ENCODE measurements at regions of chr15 and their contacts with region 1.

Region 1: DNA sequence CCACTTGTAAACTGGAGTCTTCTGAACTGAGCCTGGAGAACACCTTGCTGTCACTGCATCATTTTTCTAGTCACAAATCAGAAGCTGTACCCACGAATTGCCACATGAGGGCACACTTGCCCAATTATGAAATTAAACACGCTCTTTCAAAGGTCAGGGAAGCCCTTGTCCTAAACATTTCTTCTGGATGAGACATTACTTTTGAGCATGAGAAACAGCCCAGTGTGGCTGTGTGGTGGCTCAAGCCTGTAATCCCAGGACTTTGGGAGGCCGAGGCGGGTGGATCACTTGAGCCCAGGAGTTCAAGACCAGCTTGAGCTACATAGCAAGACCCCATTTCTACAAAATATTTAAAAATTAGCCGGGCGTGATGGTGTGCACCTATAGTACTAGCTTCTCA is 27.5 kb upstream of the CFAP161 start:
- DNase-seq: peak in 4 of 5 donors; percentile 19 to 57 (median 40)
- H3K4me3 ChIP-seq: no peak overlapping the region
- H3K27ac ChIP-seq: no peak overlapping the region
- H3K4me1 ChIP-seq: peaks cover 1% of the 10 kb centered on the region
- H3K27me3 ChIP-seq: no peaks in the 10 kb centered on the region
- CTCF ChIP-seq: peak; percentile 16 to 60 (median 54)
- EP300 ChIP-seq: no peak
- POLR2A ChIP-seq: no peak

Region 2: DNA sequence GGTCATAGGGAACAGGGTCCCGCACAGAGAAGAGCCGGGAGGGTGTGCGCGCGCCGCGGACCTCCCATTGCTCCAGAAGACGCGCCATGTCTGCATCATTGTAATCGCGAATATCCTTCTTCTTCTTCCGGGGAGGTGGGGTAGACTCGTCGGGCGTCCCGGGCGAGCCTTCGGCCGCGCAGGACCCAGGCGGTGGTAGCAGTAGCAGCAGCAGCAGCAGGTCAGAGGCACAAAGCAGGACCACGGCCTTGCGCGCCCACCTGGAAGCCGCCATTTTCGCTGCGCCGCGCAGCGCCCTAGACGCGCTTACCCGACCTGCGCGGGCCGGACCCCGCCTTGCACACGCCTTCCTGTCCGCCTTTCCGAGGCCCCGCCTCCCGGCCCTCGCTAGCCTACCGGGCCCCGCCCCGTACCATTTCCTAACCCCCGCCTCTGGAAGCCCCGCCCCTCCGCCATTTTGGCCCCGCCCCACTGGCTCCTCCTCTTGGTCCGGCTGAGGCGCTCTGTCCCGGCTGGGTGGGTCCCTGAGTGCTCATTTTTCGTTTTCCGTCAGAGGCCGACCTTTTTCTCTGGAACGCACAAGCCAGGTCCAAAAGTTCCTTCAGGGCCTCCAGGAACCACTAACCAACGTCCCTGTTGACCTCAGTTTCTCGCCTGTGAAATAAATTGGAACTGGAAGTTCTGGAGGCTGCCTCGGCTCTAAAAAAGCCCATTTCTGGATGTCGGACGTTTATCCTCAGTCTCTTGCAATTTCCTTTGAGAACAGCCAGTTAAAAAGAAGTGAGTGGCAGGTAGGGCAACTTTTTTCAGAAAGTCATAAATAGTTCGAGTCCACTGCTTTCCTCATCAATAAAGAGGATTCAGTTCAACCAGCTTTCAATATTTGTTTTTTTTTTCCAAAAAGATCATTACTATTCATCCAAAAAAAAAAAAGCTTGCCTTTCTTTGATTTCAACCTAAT is 116.8 kb before region 1 on chr15 and contains the start of gene MESD:
- intact Hi-C with region 1: loop called in 1 of 4 experiments (anchors 5 kb)
- DNase-seq: peak; percentile 98 to 99 (median 99)
- H3K4me3 ChIP-seq: peak within 1 kb of the TSS; percentile 90
- H3K27ac ChIP-seq: peak within 1 kb of the TSS; percentile 82 to 84
- H3K4me1 ChIP-seq: peaks cover 18% of the 10 kb centered on the region
- H3K27me3 ChIP-seq: no peaks in the 10 kb centered on the region
- CTCF ChIP-seq: no peak
- EP300 ChIP-seq: no peak
- POLR2A ChIP-seq: peak; percentile 70
- total RNA-seq, gene MESD: 20.7 to 34.2 (median 29.3) TPM